ENCODE measurements at regions of chr16 and their contacts with region 1.

Region 1: GRCh38 chr16:30112197-30113030 is 923 bp downstream of the GDPD3 start:
- DNase-seq: peak; percentile 84
- H3K4me3 ChIP-seq: no peak overlapping the region
- H3K27ac ChIP-seq: peak overlapping the region; percentile 81 to 98 (median 88)
- H3K4me1 ChIP-seq: peaks cover 28 to 42% (median 33%) of the 10 kb centered on the region in 4 donors
- H3K27me3 ChIP-seq: no peaks in the 10 kb centered on the region
- CTCF ChIP-seq: peak; percentile 67 to 88 (median 78)
- EP300 ChIP-seq: no peak
- POLR2A ChIP-seq: no peak

Region 2: GRCh38 chr16:30183233-30184095 is 71.0 kb after region 1 on chr16 and contains the start of gene CORO1A:
- in situ Hi-C with region 1: no loop called
- intact Hi-C with region 1: loop called (anchors 10 kb)
- DNase-seq: peak; percentile 90
- H3K4me3 ChIP-seq: peak within 1 kb of the TSS; percentile 4 to 63 (median 50)
- H3K27ac ChIP-seq: peak within 1 kb of the TSS; percentile 80 to 86 (median 80)
- H3K4me1 ChIP-seq: peaks cover 3 to 30% (median 15%) of the 10 kb centered on the region in 4 donors
- H3K27me3 ChIP-seq: no peaks in the 10 kb centered on the region
- CTCF ChIP-seq: no peak
- EP300 ChIP-seq: no peak
- POLR2A ChIP-seq: peak; percentile 47
- total RNA-seq, gene CORO1A: 5.6 to 30.2 (median 24.0) TPM

Region 3: GRCh38 chr16:30407102-30407803 is 294.8 kb after region 1 on chr16 and contains the start of gene ZNF771:
- in situ Hi-C with region 1: loop called in 2 of 4 experiments (anchors 25 kb)
- intact Hi-C with region 1: no loop called
- DNase-seq: peak; percentile 96
- H3K4me3 ChIP-seq: peak within 1 kb of the TSS; percentile 45 to 75 (median 60)
- H3K27ac ChIP-seq: peak within 1 kb of the TSS; percentile 77 to 95 (median 90)
- H3K4me1 ChIP-seq: peaks cover 12 to 30% (median 23%) of the 10 kb centered on the region in 4 donors
- H3K27me3 ChIP-seq: no peaks in the 10 kb centered on the region
- CTCF ChIP-seq: peak in 2 of 5 experiments; percentile 24 to 31
- EP300 ChIP-seq: no peak
- POLR2A ChIP-seq: peak; percentile 66
- total RNA-seq, gene ZNF771: 7.4 to 28.1 (median 15.1) TPM

Measured in transverse colon (tissue), 4 donors.